ENCODE measurements at regions of chr20 and their contacts with region 1.

Region 1: DNA sequence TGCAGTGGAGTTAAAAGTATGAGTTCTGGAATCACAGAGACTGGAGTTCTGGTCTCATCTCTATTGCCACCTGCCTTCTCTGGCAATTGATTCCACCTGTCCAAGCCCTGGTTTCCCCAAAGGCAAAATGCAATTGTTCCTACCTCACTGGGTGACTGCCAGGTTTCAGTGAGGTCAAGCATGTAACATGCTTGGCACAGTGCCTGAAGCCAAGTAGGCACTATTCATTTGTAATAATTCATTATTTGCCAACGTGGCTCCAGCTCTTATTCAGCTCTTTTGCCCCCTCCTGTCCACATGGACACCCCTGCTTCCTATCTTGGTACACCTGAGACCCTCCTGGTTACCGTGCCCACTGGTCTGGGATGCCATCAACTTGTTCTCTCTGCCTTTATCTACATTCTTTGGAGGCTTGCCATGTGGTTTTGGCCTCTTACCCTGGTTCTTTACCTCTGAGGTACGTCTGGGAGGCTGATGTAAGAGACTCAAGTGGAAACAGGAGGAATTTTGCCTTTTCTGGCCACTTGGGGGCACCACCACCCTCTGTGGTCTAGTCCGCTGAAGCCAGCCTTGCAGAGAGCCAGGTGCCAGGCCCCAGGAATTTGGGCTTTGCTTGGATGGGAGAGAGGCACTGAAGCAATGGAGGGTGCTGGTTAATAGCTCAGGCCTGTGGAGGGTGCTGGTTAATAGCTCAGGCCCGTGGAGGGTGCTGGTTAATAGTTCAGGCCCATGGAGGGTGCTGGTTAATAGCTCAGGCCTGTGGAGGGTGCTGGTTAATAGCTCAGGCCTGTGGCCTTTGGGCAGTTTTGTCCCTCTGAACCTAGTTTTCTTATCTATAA is 1.7 kb downstream of the KCNK15 start:
- DNase-seq: peak; percentile 92
- H3K4me3 ChIP-seq: no peak overlapping the region
- H3K27ac ChIP-seq: no peak overlapping the region
- H3K4me1 ChIP-seq: no peaks in the 10 kb centered on the region
- H3K27me3 ChIP-seq: no peaks in the 10 kb centered on the region
- CTCF ChIP-seq: peak; percentile 69 to 78 (median 75)
- POLR2A ChIP-seq: no peak

Region 2: DNA sequence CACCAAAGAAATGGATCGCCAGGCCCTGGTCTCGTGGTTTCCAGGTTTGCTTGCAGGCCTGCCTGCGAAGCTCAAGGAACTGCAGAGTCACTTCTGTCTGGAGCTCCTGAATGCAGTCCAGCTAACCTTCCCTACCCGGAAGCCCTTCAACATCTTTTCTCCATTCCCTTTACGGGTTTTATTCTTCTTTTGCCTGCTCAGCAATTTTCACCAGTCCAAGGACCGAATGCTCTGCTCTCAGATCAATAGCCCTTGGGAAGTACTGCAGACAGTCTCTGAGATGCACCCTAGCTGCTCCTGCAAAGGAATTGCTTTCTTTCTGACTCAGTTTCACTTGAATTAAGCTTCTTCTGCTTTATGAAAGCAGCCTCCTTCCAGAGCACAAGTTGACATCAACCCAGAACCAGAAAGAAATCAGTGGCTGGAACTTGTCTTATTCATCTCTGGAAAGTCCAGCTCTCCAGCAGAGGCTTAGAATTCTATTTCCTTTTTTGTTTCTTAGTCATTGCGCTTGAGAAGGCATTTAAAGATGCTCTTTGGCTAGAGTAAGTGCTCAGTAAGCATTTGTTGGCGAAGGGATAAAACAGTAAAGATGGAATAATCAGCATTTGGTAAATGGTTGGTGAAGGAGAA is 119.4 kb after region 1 on chr20:
- intact Hi-C with region 1: loop called (anchors 5 kb)
- DNase-seq: no peak
- H3K4me3 ChIP-seq: no peak overlapping the region
- H3K27ac ChIP-seq: no peak overlapping the region
- H3K4me1 ChIP-seq: peaks cover 30% of the 10 kb centered on the region
- H3K27me3 ChIP-seq: no peaks in the 10 kb centered on the region
- CTCF ChIP-seq: no peak
- POLR2A ChIP-seq: no peak